ENCODE measurements at regions of chr16 and their contacts with region 1.

Region 1: GRCh38 chr16:8948831-8949230 is 14.9 kb downstream of the USP7 start:
- DNase-seq: no peak
- H3K4me3 ChIP-seq: no peak overlapping the region
- H3K4me3 Mint-ChIP-seq: peak overlapping the region; percentile 47 to 82 (median 72)
- H3K27ac ChIP-seq: no peak overlapping the region
- H3K27ac Mint-ChIP-seq: peak overlapping the region in 5 of 8 donors; percentile 4 to 70 (median 38)
- H3K4me1 ChIP-seq: peaks cover 96% of the 10 kb centered on the region
- H3K4me1 Mint-ChIP-seq: peaks cover 92 to 96% (median 95%) of the 10 kb centered on the region in 3 donors
- H3K27me3 ChIP-seq: no peaks in the 10 kb centered on the region
- H3K27me3 Mint-ChIP-seq: no peaks in the 10 kb centered on the region

Region 2: GRCh38 chr16:8936421-8936820 is 12.4 kb before region 1 on chr16:
- CTCF ChIA-PET with region 1: interaction called, 11 read pairs
- POLR2A ChIA-PET with region 1: no interaction called
- DNase-seq: peak; percentile 42 to 82 (median 54)
- H3K4me3 ChIP-seq: no peak overlapping the region
- H3K4me3 Mint-ChIP-seq: peak overlapping the region in 6 of 7 donors; percentile 6 to 76 (median 28)
- H3K27ac ChIP-seq: no peak overlapping the region
- H3K27ac Mint-ChIP-seq: peak overlapping the region in 7 of 8 donors; percentile 6 to 61 (median 43)
- H3K4me1 ChIP-seq: peaks cover 63% of the 10 kb centered on the region
- H3K4me1 Mint-ChIP-seq: peaks cover 79 to 99% (median 93%) of the 10 kb centered on the region in 3 donors
- H3K27me3 ChIP-seq: no peaks in the 10 kb centered on the region
- H3K27me3 Mint-ChIP-seq: peaks cover 0 to 2% of the 10 kb centered on the region in 2 donors

Region 3: GRCh38 chr16:8989099-8989878 is 40.5 kb after region 1 on chr16:
- CTCF ChIA-PET with region 1: no interaction called
- POLR2A ChIA-PET with region 1: no interaction called
- DNase-seq: no peak
- H3K4me3 ChIP-seq: no peak overlapping the region
- H3K4me3 Mint-ChIP-seq: no peak overlapping the region
- H3K27ac ChIP-seq: no peak overlapping the region
- H3K27ac Mint-ChIP-seq: no peak overlapping the region
- H3K4me1 ChIP-seq: no peaks in the 10 kb centered on the region
- H3K4me1 Mint-ChIP-seq: no peaks in the 10 kb centered on the region
- H3K27me3 ChIP-seq: no peaks in the 10 kb centered on the region
- H3K27me3 Mint-ChIP-seq: peaks cover 0 to 2% of the 10 kb centered on the region in 2 donors

Region 4: GRCh38 chr16:9027070-9027795 is 78.4 kb after region 1 on chr16:
- CTCF ChIA-PET with region 1: no interaction called
- POLR2A ChIA-PET with region 1: no interaction called
- DNase-seq: no peak
- H3K4me3 ChIP-seq: no peak overlapping the region
- H3K4me3 Mint-ChIP-seq: no peak overlapping the region
- H3K27ac ChIP-seq: no peak overlapping the region
- H3K27ac Mint-ChIP-seq: no peak overlapping the region
- H3K4me1 ChIP-seq: no peaks in the 10 kb centered on the region
- H3K4me1 Mint-ChIP-seq: no peaks in the 10 kb centered on the region
- H3K27me3 ChIP-seq: no peaks in the 10 kb centered on the region
- H3K27me3 Mint-ChIP-seq: peaks cover 4 to 7% of the 10 kb centered on the region in 2 donors

Region 5: DNA sequence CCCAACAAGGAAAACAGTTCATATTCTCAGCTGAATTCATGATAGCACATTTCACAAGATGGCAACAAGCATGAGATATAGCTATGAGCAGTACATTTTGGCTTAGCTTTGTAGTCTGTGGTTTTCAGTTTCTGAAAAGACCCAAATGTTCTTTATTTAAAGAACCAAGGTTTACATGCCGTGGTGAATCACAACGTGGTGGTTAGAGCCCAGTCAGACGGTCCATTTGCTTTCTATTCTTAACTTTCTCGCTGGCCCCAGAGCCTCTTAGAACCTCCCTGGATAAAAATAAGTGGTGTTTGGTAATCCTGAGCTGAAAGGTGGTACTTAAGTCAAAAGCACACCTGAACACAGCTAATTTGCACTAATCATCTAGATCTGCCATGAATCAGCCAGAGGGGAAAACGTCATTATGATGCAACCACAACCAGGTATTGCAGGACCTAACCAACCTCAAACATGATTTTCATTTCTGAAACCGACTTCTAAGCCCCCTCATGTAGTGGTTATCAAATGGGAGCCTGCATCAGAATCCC is 124.0 kb after region 1 on chr16:
- CTCF ChIA-PET with region 1: no interaction called
- POLR2A ChIA-PET with region 1: no interaction called
- DNase-seq: no peak
- H3K4me3 ChIP-seq: no peak overlapping the region
- H3K4me3 Mint-ChIP-seq: no peak overlapping the region
- H3K27ac ChIP-seq: no peak overlapping the region
- H3K27ac Mint-ChIP-seq: peak overlapping the region in 1 of 8 donors; percentile 61
- H3K4me1 ChIP-seq: peaks cover 6% of the 10 kb centered on the region
- H3K4me1 Mint-ChIP-seq: peaks cover 4 to 12% (median 9%) of the 10 kb centered on the region in 3 donors
- H3K27me3 ChIP-seq: no peaks in the 10 kb centered on the region
- H3K27me3 Mint-ChIP-seq: peaks cover 3 to 4% of the 10 kb centered on the region in 2 donors